ENCODE measurements at regions of chr4 and their contacts with region 1.

Region 1: GRCh38 chr4:86279293-86279960 is 80.4 kb downstream of the MAPK10 start:
- DNase-seq: no peak
- ATAC-seq: no peak
- H3K4me3 ChIP-seq: no peak overlapping the region
- H3K27ac ChIP-seq: no peak overlapping the region
- H3K4me1 ChIP-seq: no peaks in the 10 kb centered on the region; the same call in 1 of the 2 replicates
- H3K27me3 ChIP-seq: no peaks in the 10 kb centered on the region
- CTCF ChIP-seq: no peak

Region 2: GRCh38 chr4:86185659-86186058 is 93.8 kb before region 1 on chr4:
- CTCF ChIA-PET with region 1: no interaction called
- POLR2A ChIA-PET with region 1: no interaction called
- intact Hi-C with region 1: no loop called
- DNase-seq: no peak
- ATAC-seq: no peak
- H3K4me3 ChIP-seq: no peak overlapping the region
- H3K27ac ChIP-seq: no peak overlapping the region
- H3K4me1 ChIP-seq: no peaks in the 10 kb centered on the region
- H3K27me3 ChIP-seq: no peaks in the 10 kb centered on the region
- CTCF ChIP-seq: no peak

Region 3: DNA sequence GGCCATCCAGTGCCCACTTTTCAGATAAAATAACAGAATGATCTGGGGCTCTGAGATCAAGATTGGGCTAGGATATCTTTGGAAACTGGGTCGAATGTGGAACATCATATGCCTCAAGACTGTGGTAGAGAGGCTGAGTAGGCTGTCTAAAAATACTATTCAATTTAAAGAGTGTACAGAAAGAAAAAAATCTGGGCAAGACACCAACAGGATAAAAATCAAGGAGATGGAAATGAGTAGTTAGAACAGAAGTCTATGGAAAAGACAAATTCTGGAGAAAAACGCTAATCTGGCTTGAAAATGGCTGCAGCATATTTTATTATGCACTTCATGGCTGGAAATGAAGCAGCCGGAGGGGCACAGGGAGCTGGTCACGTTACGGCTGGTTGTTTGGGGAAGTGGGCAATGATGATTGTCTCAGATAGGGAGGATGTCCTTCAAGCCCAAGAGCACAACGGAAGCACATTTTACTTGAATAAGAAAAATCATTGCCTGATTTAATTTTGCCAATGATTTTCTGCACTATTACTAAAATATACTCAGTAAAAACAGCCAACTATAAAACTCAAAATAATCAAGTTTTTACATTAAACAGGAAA is 107.5 kb after region 1 on chr4:
- CTCF ChIA-PET with region 1: no interaction called
- POLR2A ChIA-PET with region 1: no interaction called
- intact Hi-C with region 1: loop called (anchors 5 kb)
- DNase-seq: no peak
- ATAC-seq: no peak
- H3K4me3 ChIP-seq: no peak overlapping the region
- H3K27ac ChIP-seq: no peak overlapping the region
- H3K4me1 ChIP-seq: no peaks in the 10 kb centered on the region; the same call in 1 of the 2 replicates
- H3K27me3 ChIP-seq: no peaks in the 10 kb centered on the region
- CTCF ChIP-seq: no peak

Measured in PC-3 (cell line).